ENCODE measurements at regions of chr15 and their contacts with region 1.

Region 1: DNA sequence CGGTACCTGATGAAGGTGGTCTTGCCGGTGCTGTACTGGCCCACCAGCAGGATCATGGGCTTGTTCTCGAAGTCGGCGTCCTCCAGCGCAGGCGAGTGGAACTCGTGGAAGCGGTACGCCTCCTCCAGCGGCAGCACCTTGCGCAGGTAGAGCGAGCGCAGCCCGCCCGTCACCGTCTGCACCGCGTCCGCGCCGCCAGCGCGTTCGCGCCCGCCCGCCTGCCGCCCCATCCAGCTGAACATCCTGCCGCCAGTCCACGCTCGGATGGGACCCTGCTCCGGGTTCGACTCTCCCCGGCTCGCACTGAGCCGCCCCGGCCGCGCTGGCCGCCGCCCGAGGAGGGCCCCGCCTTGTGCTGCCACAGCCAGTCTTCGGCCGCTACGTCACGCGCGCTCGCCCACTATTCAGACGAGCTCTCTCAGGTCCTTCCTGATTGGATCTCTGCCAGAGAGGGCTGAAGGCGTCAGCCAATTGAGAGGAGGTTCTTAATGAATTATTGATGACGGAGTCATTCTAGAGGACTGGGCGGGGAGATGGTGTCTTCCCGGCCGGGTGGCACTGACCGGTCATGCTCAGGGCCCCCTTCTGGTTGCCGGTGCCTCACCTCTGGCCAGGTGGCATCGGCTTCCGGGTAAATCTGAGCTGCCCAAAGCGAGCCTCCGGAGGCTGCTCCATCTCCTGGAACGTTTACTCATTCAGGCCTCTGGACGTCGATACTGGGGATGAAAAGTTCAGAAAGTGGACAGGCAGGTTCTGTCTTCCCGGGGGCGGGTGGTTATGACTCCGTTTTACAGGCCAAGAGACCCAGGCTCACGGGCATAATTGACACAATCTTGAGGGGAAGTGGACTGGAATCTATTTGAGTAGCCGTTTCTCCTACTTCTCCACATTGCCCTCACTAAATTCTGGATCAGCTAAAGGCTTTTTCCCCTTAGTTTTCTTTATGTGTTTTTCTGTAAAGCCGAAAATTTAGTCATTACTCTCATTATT is at the start of gene EHD4:
- DNase-seq: peak; percentile 98
- H3K4me3 Mint-ChIP-seq: peak within 1 kb of the TSS; percentile 90
- H3K27ac Mint-ChIP-seq: peak within 1 kb of the TSS; percentile 97
- H3K4me1 Mint-ChIP-seq: peaks cover 53% of the 10 kb centered on the region
- H3K27me3 Mint-ChIP-seq: peaks cover 7% of the 10 kb centered on the region
- total RNA-seq, gene EHD4: 43.6 to 45.0 TPM

Region 2: DNA sequence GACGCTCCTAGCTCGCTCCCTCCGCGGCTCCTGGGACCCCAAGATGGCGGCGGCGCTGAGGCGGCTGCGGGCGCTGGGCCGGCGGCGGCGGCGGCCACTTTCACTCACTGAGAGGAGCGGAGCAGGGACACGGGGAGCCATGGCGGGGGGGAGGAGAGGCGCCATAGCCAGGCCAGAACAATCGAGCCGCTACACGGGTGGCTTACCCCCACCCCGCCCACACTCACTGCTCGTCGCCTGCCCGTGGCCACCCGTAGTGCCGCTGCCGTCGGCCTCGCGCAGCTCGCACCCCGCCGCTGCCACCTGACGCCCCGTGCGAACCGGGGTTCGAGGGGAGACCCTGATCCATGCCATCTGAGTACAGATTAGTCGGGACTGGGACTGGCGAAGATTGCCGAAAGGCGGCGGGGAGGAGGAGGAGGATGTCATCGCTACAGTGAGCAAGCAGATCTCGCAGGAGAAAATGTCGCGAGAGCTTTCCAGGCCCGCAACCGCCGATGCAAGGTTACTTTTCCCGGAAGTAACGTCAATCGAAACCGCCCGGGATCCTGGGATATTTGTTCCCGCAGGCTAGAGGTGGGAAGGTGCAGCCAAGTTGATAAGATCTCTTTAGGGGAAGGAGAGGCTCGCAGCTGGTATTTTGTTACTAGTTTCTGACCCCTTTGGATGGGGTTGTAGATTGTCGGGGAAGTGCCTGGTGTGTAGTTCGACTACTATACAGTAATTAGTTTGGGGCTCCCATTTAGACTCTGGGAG is 856.3 kb before region 1 on chr15 and contains the start of gene INO80:
- CTCF ChIA-PET with region 1: no interaction called
- POLR2A ChIA-PET with region 1: no interaction called
- intact Hi-C with region 1: loop called (anchors 5 kb)
- DNase-seq: peak; percentile 98
- H3K4me3 Mint-ChIP-seq: peak within 1 kb of the TSS; percentile 91
- H3K27ac Mint-ChIP-seq: peak within 1 kb of the TSS; percentile 98
- H3K4me1 Mint-ChIP-seq: peaks cover 12% of the 10 kb centered on the region
- H3K27me3 Mint-ChIP-seq: no peaks in the 10 kb centered on the region
- total RNA-seq, gene INO80: 19.9 to 22.8 TPM

Region 3: DNA sequence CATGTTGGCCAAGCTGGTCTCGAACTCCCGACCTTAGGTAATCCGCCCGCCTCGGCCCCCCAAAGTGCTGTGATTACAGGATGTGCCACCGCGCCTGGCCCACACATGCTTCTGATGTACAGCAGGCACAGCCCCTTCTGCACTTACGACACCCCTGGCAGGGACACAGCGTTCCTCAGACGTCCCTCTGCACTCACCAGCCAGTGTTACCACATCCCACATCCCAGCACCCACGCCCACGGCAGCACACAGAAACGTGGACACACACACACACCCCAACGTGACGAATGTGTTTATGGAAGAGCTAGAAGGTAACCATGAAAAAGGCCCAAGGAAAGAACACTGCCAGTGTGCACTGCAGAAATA is 427.9 kb before region 1 on chr15:
- CTCF ChIA-PET with region 1: no interaction called
- POLR2A ChIA-PET with region 1: no interaction called
- intact Hi-C with region 1: loop called (anchors 5 kb)
- DNase-seq: no peak
- H3K4me3 Mint-ChIP-seq: peak overlapping the region; percentile 95
- H3K27ac Mint-ChIP-seq: no peak overlapping the region
- H3K4me1 Mint-ChIP-seq: peaks cover 8% of the 10 kb centered on the region
- H3K27me3 Mint-ChIP-seq: no peaks in the 10 kb centered on the region

Region 4: GRCh38 chr15:41827880-41828806 is 144.4 kb before region 1 on chr15 and contains the start of gene JMJD7:
- CTCF ChIA-PET with region 1: interaction called, 3 read pairs
- POLR2A ChIA-PET with region 1: interaction called, 3 read pairs
- intact Hi-C with region 1: loop called (anchors 1 kb)
- DNase-seq: peak; percentile 96
- H3K4me3 Mint-ChIP-seq: peak within 1 kb of the TSS; percentile 80
- H3K27ac Mint-ChIP-seq: peak within 1 kb of the TSS; percentile 52
- H3K4me1 Mint-ChIP-seq: peaks cover 40% of the 10 kb centered on the region
- H3K27me3 Mint-ChIP-seq: no peaks in the 10 kb centered on the region
- total RNA-seq, gene JMJD7: 17.9 to 24.8 TPM

Region 5: DNA sequence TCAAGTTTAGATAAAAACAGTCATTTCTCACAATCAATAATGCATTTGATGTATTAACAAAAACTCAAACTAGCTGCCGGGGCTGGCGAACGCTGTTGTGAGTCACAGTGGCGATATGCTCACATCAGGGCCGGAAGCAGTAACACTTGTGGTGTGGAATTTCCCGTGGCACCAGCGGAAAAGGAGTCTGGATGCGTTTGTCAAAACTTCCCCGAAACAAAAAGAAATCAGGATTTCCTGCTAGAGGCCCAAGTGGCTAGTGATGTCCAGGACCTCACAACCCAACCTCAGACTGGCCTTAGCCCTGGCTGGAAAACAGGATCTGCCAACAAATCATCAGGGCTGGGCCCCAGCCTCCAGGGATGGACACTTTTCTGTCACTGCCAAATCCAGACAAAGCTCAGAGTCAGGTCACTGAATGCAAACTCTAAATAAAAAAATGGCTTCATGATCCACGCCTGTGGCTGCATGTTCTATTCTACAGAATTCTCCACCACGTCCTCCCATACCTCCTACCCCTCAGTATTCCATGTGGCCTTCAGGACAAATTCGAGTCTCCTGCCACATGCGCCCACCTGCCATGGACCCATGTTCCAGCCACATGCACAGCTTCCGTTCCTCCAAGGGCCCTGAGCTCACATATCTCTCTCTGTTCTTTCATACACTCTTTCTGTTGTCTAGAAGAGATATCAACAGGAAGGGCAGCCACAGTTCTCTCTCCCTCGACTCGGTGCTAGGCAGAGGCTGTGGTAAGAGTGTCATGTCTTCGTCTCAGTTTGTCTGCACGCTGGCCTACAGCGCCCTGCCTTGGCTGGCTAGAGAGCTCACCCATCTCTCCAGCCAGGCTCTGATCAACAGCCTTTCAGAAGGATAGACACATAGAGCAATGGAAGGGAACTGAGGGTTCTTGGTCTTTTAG is 35.6 kb before region 1 on chr15:
- CTCF ChIA-PET with region 1: interaction called, 38 read pairs
- POLR2A ChIA-PET with region 1: interaction called, 131 read pairs
- intact Hi-C with region 1: loop called (anchors 1 kb)
- DNase-seq: peak; percentile 94
- H3K4me3 Mint-ChIP-seq: peak overlapping the region; percentile 68
- H3K27ac Mint-ChIP-seq: peak overlapping the region; percentile 98
- H3K4me1 Mint-ChIP-seq: peaks cover 83% of the 10 kb centered on the region
- H3K27me3 Mint-ChIP-seq: no peaks in the 10 kb centered on the region

Region 6: DNA sequence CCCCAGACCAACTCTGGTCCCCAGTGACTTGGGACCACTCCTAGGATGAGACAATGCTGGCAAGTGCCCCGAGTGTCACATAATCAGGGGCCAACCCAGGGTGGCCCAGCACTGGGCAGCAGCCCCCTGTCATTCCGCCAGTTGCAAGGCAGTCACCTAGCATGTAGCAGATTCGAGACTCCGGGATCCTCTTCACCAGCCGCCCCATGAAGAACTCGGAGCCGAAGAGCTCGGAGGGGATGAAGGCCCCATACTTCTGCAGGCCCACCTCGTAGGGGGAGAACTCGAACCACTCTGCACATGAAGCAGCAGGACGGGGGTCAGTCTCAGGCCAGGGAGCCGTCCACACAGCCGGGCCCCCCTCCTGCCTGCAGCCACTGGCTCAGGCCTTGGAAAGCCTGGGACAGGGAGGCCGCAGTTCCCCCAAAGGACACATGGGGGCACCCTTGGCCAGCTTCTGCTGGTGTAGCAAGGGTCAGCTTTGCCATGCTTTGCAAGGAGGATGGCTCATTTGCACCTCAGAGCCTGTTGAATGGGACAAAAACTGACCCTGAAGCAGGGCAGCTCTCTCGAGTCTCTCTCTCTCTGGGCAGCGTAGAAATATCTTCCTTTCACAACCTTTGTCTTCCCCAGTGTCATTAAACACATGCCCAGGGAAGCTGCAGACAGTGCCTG is 16.8 kb after region 1 on chr15:
- CTCF ChIA-PET with region 1: interaction called, 13 read pairs
- POLR2A ChIA-PET with region 1: no interaction called
- intact Hi-C with region 1: no loop called
- DNase-seq: peak; percentile 91
- H3K4me3 Mint-ChIP-seq: no peak overlapping the region
- H3K27ac Mint-ChIP-seq: no peak overlapping the region
- H3K4me1 Mint-ChIP-seq: no peaks in the 10 kb centered on the region
- H3K27me3 Mint-ChIP-seq: no peaks in the 10 kb centered on the region

Region 7: GRCh38 chr15:42273102-42273899 is 300.8 kb after region 1 on chr15 and contains the starts of genes GANC and TMEM87A:
- CTCF ChIA-PET with region 1: no interaction called
- POLR2A ChIA-PET with region 1: interaction called, 3 read pairs
- intact Hi-C with region 1: loop called (anchors 1 kb)
- DNase-seq: peak; percentile 98
- H3K4me3 Mint-ChIP-seq: peak within 1 kb of the TSS; percentile 99
- H3K27ac Mint-ChIP-seq: peak within 1 kb of the TSS; percentile 99
- H3K4me1 Mint-ChIP-seq: peaks cover 44% of the 10 kb centered on the region
- H3K27me3 Mint-ChIP-seq: no peaks in the 10 kb centered on the region
- total RNA-seq, gene GANC: 23.5 to 26.1 TPM
- total RNA-seq, gene TMEM87A: 26.1 to 28.7 TPM